ENCODE measurements at regions of chr1 and their contacts with region 1.

Region 1: GRCh38 chr1:167599957-167600581 is 30.0 kb upstream of the RCSD1 start:
- DNase-seq: peak; percentile 63
- ATAC-seq: peak; percentile 88
- H3K4me3 Mint-ChIP-seq: peak overlapping the region; percentile 21
- H3K27ac Mint-ChIP-seq: peak overlapping the region; percentile 89
- H3K4me1 Mint-ChIP-seq: peaks cover 37% of the 10 kb centered on the region
- H3K27me3 Mint-ChIP-seq: no peaks in the 10 kb centered on the region

Region 2: DNA sequence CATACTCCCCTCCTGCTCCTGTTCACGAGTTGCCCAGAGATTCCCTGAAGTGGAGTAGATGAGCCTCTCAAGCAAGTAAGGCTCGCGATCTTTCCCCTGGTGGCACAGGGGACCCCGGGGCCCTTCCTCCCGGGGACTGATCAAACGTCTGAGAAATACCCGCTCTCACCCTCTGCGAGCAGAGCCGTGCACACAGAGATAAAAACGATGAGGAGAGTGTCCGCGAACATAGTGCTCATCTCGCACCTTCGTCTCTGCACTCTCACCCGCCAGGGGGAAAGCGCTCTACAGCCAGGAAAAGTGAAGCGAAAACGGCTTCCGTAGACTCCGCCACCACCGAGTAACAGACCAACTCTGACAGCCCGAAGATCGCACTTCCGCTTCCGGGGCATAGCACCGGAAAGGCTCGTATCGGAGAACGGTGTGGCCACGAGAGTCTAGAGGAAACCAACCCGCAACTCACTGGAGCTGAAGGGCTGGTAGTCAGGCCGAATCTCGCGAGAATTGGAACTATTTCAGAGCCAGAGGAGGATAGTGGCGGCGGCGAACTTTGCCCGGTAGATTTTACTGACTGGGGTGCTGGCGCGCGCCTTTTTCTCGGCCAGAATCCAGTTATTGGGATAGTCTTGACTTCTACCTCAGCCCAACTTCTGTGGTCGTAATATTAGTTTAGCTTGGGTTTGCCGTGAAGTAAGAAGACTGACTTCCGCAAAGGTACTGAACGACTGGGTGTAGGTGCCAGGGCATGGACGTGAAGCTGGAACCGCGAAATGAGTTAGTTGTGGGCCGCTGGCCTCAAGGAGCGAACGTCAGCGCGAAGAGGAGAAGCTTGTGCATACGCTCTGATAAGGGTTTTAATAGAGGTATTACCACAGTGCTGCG is 1831.3 kb before region 1 on chr1 and contains the start of gene TMCO1:
- CTCF ChIA-PET with region 1: no interaction called
- POLR2A ChIA-PET with region 1: no interaction called
- intact Hi-C with region 1: loop called in 1 of 2 experiments (anchors 5 kb)
- DNase-seq: peak; percentile 96
- ATAC-seq: peak; percentile 99
- H3K4me3 Mint-ChIP-seq: peak within 1 kb of the TSS; percentile 92
- H3K27ac Mint-ChIP-seq: peak within 1 kb of the TSS; percentile 99
- H3K4me1 Mint-ChIP-seq: peaks cover 54% of the 10 kb centered on the region
- H3K27me3 Mint-ChIP-seq: no peaks in the 10 kb centered on the region
- total RNA-seq, gene TMCO1: 57.7 to 70.5 TPM

Region 3: DNA sequence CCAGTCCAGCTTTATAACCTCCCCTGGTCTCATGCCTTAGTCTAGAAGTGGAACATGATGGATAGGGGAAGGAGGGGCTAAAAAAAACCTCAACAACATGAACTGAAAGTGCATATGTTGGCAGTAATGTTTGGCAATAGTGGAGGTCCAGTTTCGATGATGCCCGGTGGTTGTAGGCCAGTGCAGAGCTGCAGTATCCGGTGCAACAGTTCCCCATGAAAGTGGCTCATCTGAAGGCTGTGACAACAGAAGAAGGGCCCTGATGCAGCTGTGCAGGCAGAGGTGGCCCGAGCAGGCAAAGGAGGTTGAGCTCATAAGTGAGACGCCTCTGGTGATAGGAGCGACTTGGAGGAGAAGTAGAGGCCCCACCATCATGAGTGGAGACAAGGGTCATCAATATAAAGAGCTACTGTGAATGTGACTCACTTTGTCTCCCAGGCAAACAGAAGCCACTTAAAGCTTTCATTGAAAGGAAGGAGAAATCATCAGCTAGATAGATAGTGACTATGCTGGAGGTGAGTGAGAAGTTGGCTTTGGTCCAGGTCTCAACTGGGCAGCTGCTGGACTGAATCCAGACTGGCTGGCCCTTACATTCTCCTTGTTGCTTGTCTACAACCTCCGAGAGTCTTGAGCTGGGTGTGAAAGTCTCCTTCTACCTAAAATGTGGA is 36.4 kb before region 1 on chr1:
- CTCF ChIA-PET with region 1: no interaction called
- POLR2A ChIA-PET with region 1: no interaction called
- intact Hi-C with region 1: no loop called
- DNase-seq: no peak
- ATAC-seq: no peak
- H3K4me3 Mint-ChIP-seq: no peak overlapping the region
- H3K27ac Mint-ChIP-seq: no peak overlapping the region
- H3K4me1 Mint-ChIP-seq: no peaks in the 10 kb centered on the region
- H3K27me3 Mint-ChIP-seq: no peaks in the 10 kb centered on the region

Region 4: GRCh38 chr1:167627865-167628641 is 28.0 kb after region 1 on chr1:
- CTCF ChIA-PET with region 1: interaction called, 27 read pairs
- POLR2A ChIA-PET with region 1: no interaction called
- intact Hi-C with region 1: loop called (anchors 1 to 2 kb)
- DNase-seq: peak; percentile 87
- ATAC-seq: peak; percentile 85
- H3K4me3 Mint-ChIP-seq: peak overlapping the region; percentile 85
- H3K27ac Mint-ChIP-seq: peak overlapping the region; percentile 98
- H3K4me1 Mint-ChIP-seq: peaks cover 53% of the 10 kb centered on the region
- H3K27me3 Mint-ChIP-seq: no peaks in the 10 kb centered on the region

Region 5: DNA sequence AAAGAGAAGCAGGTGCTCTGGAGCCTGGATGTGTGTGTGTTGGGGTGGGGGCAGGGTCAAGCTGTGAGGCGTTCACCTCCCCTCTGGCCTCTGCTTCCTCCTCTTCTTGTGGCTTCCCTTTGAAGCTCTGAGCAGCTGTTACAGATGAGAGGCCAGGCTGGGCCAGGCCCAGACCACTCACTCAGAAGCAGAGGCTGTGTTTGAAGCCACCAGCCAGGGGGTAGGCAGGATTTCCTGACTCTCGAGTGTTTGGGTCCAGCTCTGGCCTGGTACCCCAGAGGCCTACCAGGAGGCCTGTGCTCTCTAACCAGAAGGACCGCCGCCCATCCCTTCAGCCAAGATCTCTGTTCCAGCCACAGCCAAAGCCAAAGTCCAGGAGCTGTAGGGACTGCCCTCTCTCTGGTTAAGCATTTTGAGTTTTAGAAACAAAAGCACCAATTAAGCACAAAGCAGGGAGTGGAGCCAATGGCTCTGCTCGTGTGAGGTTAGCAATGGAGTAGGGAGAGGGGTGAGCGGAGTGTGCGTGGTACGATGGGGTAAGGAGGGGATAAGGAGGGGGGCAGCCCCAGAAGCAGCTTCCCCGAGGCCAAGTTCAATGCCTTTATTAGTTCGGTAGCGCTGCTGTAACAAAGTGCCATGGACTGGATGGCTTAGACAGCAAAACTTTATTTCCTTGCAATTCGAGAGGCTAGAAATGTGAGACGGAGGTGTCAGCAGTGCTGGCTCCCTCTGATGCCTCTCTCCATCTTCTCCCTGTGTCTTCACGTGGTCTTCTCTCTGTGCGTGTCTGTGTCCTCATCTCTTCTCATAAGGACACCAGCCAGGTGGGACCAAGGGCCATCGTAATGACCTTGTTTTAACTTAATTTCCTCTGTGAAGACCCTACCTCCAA is 50.4 kb after region 1 on chr1:
- CTCF ChIA-PET with region 1: interaction called, 13 read pairs
- POLR2A ChIA-PET with region 1: no interaction called
- intact Hi-C with region 1: no loop called
- DNase-seq: peak; percentile 19
- ATAC-seq: peak; percentile 35
- H3K4me3 Mint-ChIP-seq: no peak overlapping the region
- H3K27ac Mint-ChIP-seq: peak overlapping the region; percentile 72
- H3K4me1 Mint-ChIP-seq: peaks cover 74% of the 10 kb centered on the region
- H3K27me3 Mint-ChIP-seq: no peaks in the 10 kb centered on the region

Region 6: GRCh38 chr1:167687919-167688519 is 88.0 kb after region 1 on chr1:
- CTCF ChIA-PET with region 1: interaction called, 135 read pairs
- POLR2A ChIA-PET with region 1: no interaction called
- intact Hi-C with region 1: loop called (anchors 1 kb)
- DNase-seq: peak; percentile 87
- ATAC-seq: peak; percentile 76
- H3K4me3 Mint-ChIP-seq: no peak overlapping the region
- H3K27ac Mint-ChIP-seq: no peak overlapping the region
- H3K4me1 Mint-ChIP-seq: peaks cover 25% of the 10 kb centered on the region
- H3K27me3 Mint-ChIP-seq: no peaks in the 10 kb centered on the region

Region 7: GRCh38 chr1:167936068-167936929 is 336.2 kb after region 1 on chr1 and contains the start of gene DCAF6:
- CTCF ChIA-PET with region 1: no interaction called
- POLR2A ChIA-PET with region 1: no interaction called
- intact Hi-C with region 1: loop called in 1 of 2 experiments (anchors 2 kb)
- DNase-seq: peak; percentile 97
- ATAC-seq: peak; percentile 84
- H3K4me3 Mint-ChIP-seq: peak within 1 kb of the TSS; percentile 89
- H3K27ac Mint-ChIP-seq: peak within 1 kb of the TSS; percentile 97
- H3K4me1 Mint-ChIP-seq: peaks cover 34% of the 10 kb centered on the region
- H3K27me3 Mint-ChIP-seq: no peaks in the 10 kb centered on the region
- total RNA-seq, gene DCAF6: 25.6 to 28.8 TPM

Measured in activated CD4-positive, alpha-beta T cell treated with anti-CD3 and anti-CD28 coated beads for 36 hours (primary cell).